ENCODE measurements at regions of chr3 and their contacts with region 1.

Region 1: DNA sequence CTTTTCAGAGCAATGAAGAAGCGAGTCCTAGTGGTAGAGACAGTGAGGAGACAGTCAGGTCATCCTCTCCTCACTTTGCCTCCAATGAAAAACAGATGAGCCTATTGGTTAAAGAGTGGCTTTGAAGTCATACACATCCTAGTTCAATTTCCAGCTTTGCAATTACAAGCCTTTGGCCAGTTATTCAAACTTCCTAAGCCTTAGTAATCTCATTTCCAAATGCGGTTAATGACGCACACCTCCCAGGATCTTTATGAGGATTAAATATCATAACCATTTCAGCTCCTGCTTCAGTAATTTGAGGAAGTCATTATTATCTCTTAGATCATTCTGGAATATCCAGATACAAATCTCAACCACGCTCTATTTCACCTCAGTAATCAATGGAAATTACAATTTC is 10.0 kb upstream of the ST6GAL1 start:
- DNase-seq: no peak

Region 2: DNA sequence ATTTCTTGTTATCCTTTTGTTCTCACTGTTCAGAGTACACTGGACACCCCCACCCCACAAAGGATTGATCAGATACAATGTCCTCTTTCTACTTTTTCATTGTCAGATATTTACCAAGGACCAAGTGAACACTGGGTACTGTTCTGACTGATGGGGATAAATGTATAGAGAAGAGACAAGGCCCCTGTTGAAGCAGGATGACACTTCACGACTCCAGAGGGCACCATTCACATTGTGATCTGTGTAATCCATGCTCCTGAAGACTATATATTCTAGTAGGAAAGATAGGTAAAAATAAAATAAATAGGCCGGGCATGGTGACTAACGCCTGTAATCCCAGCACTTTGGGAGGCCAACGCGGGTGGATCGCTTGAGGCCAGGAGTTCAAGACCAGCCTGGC is 368.9 kb before region 1 on chr3:
- in situ Hi-C with region 1: no loop called
- DNase-seq: no peak

Region 3: DNA sequence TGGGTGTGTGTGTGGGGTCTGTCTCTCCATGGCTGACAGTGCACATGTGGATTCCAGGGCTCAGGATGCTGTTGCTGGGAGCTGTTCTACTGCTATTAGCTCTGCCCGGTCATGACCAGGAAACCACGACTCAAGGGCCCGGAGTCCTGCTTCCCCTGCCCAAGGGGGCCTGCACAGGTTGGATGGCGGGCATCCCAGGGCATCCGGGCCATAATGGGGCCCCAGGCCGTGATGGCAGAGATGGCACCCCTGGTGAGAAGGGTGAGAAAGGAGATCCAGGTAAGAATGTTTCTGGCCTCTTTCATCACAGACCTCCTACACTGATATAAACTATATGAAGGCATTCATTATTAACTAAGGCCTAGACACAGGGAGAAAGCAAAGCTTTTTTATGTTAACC is 67.3 kb before region 1 on chr3:
- in situ Hi-C with region 1: loop called (anchors 10 kb)
- DNase-seq: no peak

Measured in KBM-7 (cell line).